Left ventricle myocardium superior (tissue), 1 donor: ENCODE measurements at regions of chr2 and their contacts with region 1.

Region 1: DNA sequence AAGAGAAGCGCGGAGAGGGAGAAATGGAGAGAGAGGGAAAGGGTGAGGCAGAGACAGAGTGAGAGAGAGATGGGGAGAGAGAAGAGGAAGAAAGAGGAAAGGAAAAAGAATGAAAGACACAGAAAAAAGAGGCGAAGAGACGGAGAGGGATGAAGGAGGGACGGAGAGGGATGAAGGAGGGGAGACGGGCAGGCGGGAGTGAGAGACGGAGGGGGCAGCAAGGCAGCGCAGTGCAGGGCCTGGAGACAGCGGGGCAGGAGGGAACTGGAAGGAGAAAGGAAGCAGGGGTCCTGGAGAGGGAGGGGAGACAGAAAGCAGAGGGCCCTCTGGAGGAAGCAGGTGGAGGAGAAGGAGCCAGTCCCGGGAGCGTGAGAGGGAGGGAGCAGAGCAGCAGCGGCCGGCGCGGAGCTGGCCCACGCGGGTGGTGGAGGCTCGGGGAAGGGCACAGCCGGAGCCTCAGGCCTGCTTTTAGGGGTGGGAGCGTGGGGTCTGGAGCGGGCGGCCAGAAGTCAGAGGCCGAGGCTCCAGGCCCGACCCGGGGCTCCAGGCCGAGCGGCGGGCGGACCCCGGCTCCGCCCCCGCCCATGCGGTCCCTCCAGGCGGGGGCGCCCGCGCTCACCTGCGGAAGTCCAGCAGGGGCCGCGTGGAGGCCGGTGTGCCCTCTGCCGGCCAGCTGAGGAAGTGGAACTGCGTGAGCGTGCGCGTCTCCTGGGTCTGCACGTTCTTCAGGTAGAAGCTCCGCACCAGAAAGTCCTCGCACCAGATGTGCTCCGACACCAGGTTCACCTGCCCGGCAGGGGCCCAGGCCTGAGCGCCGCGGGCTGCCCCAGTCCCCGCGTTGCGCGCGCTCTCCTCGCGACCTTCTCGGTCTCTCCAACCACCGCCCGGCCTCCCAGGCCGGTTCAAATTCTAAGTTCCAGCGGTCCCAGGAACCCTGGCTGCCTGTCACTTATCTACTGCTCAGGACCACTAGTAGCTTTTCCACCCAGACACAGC is 14.5 kb downstream of the PTPRN start:
- DNase-seq: peak; percentile 94
- ATAC-seq: peak; percentile 93

Region 2: GRCh38 chr2:218671654-218672566 is 622.7 kb before region 1 on chr2 and contains the starts of genes RNF25 and STK36:
- intact Hi-C with region 1: no loop called
- DNase-seq: peak; percentile 87
- ATAC-seq: peak; percentile 97
- total RNA-seq, gene RNF25: 12.4 TPM
- total RNA-seq, gene STK36: 12.9 TPM

Region 3: GRCh38 chr2:219160186-219161017 is 134.3 kb before region 1 on chr2 and contains the start of gene NHEJ1:
- intact Hi-C with region 1: loop called (anchors 5 kb)
- DNase-seq: peak; percentile 99
- ATAC-seq: peak; percentile 98
- total RNA-seq, gene NHEJ1: 7.0 TPM

Region 4: GRCh38 chr2:219171231-219171651 is 123.4 kb before region 1 on chr2:
- intact Hi-C with region 1: no loop called
- DNase-seq: peak; percentile 54
- ATAC-seq: peak; percentile 66

Region 5: DNA sequence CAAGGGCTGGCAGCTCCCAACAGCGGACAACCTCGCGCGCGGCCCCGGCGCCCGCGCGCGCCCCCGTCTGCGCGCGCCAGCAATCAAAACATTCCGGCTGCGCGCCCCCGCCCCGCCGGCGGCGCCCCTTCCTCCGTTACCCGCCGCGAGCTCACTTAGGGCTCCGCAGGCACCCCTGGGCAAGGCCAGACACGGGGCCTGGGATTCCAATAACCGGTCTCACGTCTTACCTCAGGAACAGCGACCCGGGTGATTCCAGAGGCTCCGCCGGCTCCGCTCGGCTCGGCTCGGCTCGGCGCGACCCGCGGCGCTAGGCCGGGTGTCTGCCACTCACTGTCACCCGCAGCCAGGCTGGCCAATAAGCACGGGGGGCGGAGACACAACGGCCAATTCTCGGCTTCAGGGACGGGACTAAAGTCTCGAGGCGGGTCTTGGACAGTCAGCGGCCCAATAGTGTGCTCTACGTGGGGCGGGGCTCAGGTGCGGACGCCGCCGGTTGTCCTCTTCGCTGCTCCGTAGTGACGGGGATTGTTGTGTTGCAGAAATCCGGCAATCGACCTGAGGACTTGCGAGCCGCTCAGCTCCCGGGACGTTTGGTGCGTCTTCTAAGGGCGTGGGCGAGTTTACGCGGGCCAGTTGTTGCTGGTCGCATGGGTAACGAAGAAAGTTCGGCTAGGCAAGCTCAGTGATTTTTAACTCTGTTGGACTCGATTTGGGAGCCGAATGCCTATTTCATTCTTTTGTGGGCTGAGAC is 65.2 kb before region 1 on chr2 and contains the starts of genes ANKZF1 and ATG9A:
- intact Hi-C with region 1: loop called (anchors 10 kb)
- DNase-seq: peak; percentile 99
- ATAC-seq: peak; percentile 99
- total RNA-seq, gene ANKZF1: 30.4 TPM
- total RNA-seq, gene ATG9A: 81.8 TPM

Region 6: DNA sequence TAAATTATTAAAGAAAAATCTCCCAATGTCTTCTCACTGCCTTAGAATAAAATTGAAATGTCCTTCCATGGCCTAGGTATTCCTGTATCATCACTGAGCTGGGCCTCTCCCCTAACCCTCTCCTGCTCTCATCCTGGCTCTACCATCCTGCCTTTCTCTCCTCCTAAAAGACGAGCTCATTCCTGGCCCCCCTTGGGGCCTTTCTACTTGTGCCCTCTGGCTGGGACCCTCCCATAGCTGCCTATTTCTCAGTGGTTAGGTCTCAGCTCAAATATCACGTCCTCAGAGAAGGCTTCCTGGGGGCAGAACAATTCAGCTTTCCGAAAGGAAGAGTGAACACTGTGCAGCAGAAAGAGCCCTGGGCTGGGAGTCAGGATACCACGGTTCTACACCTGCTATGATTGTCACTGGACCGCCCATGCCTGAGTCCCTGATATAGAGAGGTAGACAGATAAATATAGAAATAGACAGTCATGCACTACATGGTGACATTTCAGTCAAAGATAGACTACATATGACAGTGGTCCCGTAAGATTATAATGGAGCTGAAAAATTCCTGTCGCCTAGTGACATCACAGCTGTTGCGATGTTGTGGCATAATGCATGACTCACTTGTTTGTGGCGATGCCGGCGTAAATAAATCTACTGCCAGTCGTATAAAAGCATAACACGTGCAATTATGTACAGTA is 83.7 kb after region 1 on chr2:
- intact Hi-C with region 1: no loop called
- DNase-seq: no peak
- ATAC-seq: peak; percentile 56

Region 7: GRCh38 chr2:219398721-219399333 is 104.2 kb after region 1 on chr2:
- intact Hi-C with region 1: no loop called
- DNase-seq: no peak
- ATAC-seq: no peak